ENCODE measurements at regions of chr6 and their contacts with region 1.

Region 1: GRCh38 chr6:116615937-116616736 is at the start of gene RSPH4A:
- DNase-seq: peak; percentile 62
- H3K4me3 Mint-ChIP-seq: peak within 1 kb of the TSS; percentile 80
- H3K27ac Mint-ChIP-seq: no peak within 1 kb of the TSS
- H3K4me1 Mint-ChIP-seq: peaks cover 17% of the 10 kb centered on the region
- H3K27me3 Mint-ChIP-seq: peaks cover 41% of the 10 kb centered on the region
- total RNA-seq, gene RSPH4A: 0.36 TPM in 1 of 2 replicates, not detected in the other

Region 2: DNA sequence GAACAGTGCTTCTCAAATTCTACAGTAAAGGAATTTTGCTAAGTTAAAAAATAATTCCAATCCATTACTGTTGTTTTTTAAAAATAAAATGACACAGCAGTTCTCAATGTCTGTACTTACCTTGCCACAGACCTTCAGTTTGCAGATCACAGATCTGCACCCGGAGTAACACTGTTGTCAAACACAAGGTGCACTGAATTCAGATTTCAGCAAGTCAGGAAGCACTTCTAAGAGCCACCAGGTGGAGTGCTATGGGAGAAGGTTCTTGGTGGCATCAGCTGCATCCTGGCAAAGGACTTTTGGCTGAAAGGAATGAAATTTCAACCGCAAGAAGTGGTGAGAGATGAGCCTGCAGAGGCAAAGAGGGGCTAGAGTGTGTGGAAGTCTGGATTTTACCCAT is 17.5 kb after region 1 on chr6:
- intact Hi-C with region 1: loop called (anchors 2 kb)
- DNase-seq: no peak
- H3K4me3 Mint-ChIP-seq: no peak overlapping the region
- H3K27ac Mint-ChIP-seq: no peak overlapping the region
- H3K4me1 Mint-ChIP-seq: no peaks in the 10 kb centered on the region
- H3K27me3 Mint-ChIP-seq: no peaks in the 10 kb centered on the region

Region 3: DNA sequence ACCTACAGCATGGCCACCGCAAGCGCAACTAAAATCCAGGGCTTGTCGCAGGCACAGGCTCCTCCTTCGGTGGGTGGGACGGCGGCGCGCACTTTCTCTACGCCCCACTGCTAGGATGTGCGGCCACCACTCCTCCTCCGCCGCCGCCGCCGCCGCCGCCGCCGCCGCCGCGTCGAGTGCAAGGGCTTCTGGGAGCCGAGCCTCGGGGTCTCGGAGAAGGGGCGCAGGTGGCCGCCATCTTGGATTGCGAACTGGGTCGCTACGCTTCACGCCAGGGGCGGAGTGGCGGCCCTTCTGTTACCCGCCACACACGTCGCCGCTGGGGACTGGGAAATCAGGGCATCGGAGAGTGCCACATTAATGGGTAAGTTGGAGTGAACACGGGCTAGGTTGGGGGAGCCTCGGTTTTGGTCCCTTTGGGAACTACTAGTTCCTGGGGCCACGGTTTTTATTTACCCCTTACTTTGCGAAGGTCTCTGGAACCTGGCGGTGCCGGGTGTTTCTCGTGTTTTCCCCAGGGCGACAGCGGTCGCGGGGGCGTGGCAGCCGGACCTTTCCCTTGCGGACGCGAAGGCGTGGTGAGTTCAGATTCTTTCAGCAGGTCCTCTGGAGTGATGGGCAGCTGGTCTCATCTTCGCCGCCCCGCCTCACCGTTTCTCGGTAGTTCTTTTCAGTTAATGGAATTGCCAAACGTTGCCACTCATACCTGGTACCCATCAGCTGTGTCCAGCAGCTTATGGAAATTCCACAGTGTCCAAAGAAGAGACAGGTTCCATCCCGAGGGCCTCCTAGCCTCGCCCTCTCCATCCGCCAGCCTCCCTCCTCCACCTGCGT is 65.1 kb after region 1 on chr6 and contains the start of gene KPNA5:
- intact Hi-C with region 1: no loop called
- DNase-seq: peak; percentile 84
- H3K4me3 Mint-ChIP-seq: peak within 1 kb of the TSS; percentile 97
- H3K27ac Mint-ChIP-seq: peak within 1 kb of the TSS; percentile 97
- H3K4me1 Mint-ChIP-seq: peaks cover 25% of the 10 kb centered on the region
- H3K27me3 Mint-ChIP-seq: no peaks in the 10 kb centered on the region
- total RNA-seq, gene KPNA5: 6.1 and 7.6 TPM in 2 replicates